Gastrocnemius medialis (tissue), 4 donors: ENCODE measurements at regions of chr6 and their contacts with region 1.

Region 1: GRCh38 chr6:1436334-1437306 is 47.2 kb downstream of the FOXF2 start:
- DNase-seq: no peak
- ATAC-seq: peak; percentile 65 to 81
- H3K4me3 ChIP-seq: no peak overlapping the region
- H3K27ac ChIP-seq: no peak overlapping the region
- H3K4me1 ChIP-seq: no peaks in the 10 kb centered on the region
- H3K27me3 ChIP-seq: peaks cover 0 to 18% (median 15%) of the 10 kb centered on the region in 3 donors
- CTCF ChIP-seq: peak; percentile 61 to 70 (median 65)
- POLR2A ChIP-seq: no peak

Region 2: DNA sequence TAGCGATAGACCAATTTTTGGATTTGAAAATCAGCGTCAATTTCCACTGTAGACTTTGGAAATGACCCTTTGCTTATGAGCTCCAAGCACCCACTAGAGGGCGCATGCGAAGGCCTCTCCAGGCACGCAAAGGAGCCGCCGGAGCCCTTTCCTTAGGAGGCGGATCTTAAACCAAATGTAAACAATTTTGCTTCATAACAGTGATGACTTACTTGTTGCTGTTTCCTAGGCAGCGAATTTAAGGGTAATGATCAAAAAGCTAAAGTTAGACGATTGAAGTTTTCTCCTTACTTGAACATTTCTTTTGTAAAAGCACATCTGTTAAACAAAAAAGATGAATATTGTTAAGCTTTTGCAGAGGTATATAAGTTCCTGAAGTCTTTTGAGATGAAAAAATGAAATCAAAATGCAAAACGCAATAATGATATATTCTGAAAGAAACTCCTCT is 714.5 kb before region 1 on chr6:
- in situ Hi-C with region 1: no loop called
- intact Hi-C with region 1: loop called (anchors 5 kb)
- DNase-seq: peak; percentile 32 to 38
- ATAC-seq: peak in 1 of 2 donors; percentile 33
- H3K4me3 ChIP-seq: no peak overlapping the region
- H3K27ac ChIP-seq: no peak overlapping the region
- H3K4me1 ChIP-seq: no peaks in the 10 kb centered on the region
- H3K27me3 ChIP-seq: peaks cover 0 to under 1% (median 0%) of the 10 kb centered on the region in 3 donors
- CTCF ChIP-seq: peak; percentile 47 to 88 (median 56)
- POLR2A ChIP-seq: no peak

Region 3: GRCh38 chr6:1285956-1286355 is 150.7 kb before region 1 on chr6:
- in situ Hi-C with region 1: no loop called
- intact Hi-C with region 1: no loop called
- DNase-seq: no peak
- ATAC-seq: no peak
- H3K4me3 ChIP-seq: no peak overlapping the region
- H3K27ac ChIP-seq: no peak overlapping the region
- H3K4me1 ChIP-seq: no peaks in the 10 kb centered on the region
- H3K27me3 ChIP-seq: no peaks in the 10 kb centered on the region
- CTCF ChIP-seq: no peak
- POLR2A ChIP-seq: no peak